ENCODE measurements at regions of chrX and their contacts with region 1.

Region 1: GRCh38 chrX:108070891-108071290 is 20.5 kb downstream of the PSMD10 start:
- DNase-seq: no peak
- ATAC-seq: no peak

Region 2: DNA sequence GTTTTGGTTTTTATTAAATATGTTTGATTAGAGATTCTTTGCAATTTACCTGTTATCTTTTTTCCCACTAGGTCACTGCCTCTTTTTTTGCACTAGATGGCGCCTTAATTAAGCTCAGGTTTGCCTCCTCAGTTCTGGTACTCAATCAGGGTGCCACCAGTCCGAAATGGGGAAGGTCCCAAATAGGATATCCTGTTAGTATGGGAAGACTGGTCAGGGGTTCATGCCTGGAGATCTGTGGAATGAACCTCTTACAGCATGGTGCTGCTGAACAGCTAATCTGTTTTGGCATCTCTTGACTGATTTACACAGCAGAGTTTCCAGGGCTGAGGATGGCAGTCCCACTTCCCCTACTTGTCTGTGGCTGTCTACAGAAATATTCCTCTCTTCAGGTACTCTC is 50.3 kb before region 1 on chrX:
- intact Hi-C with region 1: loop called (anchors 5 kb)
- DNase-seq: no peak
- ATAC-seq: no peak

Measured in Right ventricle myocardium inferior (tissue), 1 donor.